ENCODE measurements at regions of chr7 and their contacts with region 1.

Region 1: GRCh38 chr7:128343554-128344430 is at the start of gene RBM28:
- DNase-seq: peak; percentile 94
- H3K4me3 ChIP-seq: peak within 1 kb of the TSS; percentile 60 to 80
- H3K27ac ChIP-seq: peak within 1 kb of the TSS; percentile 73 to 86
- H3K4me1 ChIP-seq: peaks cover 0 to 28% of the 10 kb centered on the region in 2 experiments; a peak in 2 of 4 replicates
- H3K27me3 ChIP-seq: no peaks in the 10 kb centered on the region
- CTCF ChIP-seq: no peak
- EP300 ChIP-seq: peak in 1 of 2 experiments; percentile 70; a peak in 1 of 4 replicates
- RAD21 ChIP-seq: peak; percentile 31; the same call in 1 of the 2 replicates
- polyA plus RNA-seq, gene RBM28: 29.1 and 33.0 TPM in 2 replicates

Region 2: GRCh38 chr7:128056901-128057300 is 286.9 kb before region 1 on chr7:
- CTCF ChIA-PET with region 1: no interaction called
- POLR2A ChIA-PET with region 1: no interaction called
- DNase-seq: no peak
- H3K4me3 ChIP-seq: no peak overlapping the region
- H3K27ac ChIP-seq: peak overlapping the region in 1 of 2 experiments; percentile 29; a peak in 2 of 4 replicates
- H3K4me1 ChIP-seq: peaks cover 6 to 45% of the 10 kb centered on the region in 2 experiments; a peak in 3 of 4 replicates
- H3K27me3 ChIP-seq: no peaks in the 10 kb centered on the region
- CTCF ChIP-seq: no peak
- EP300 ChIP-seq: peak in 1 of 2 experiments; percentile 60; a peak in 1 of 4 replicates
- RAD21 ChIP-seq: no peak

Region 3: GRCh38 chr7:128266883-128267607 is 76.7 kb before region 1 on chr7:
- CTCF ChIA-PET with region 1: interaction called, 10 read pairs
- POLR2A ChIA-PET with region 1: interaction called, 4 read pairs
- DNase-seq: peak; percentile 90
- H3K4me3 ChIP-seq: peak overlapping the region; percentile 30 to 33; a peak in 3 of 4 replicates
- H3K27ac ChIP-seq: peak overlapping the region; percentile 54 to 99
- H3K4me1 ChIP-seq: peaks cover 18 to 41% of the 10 kb centered on the region in 2 experiments; a peak in 3 of 4 replicates
- H3K27me3 ChIP-seq: no peaks in the 10 kb centered on the region
- CTCF ChIP-seq: peak; percentile 34
- EP300 ChIP-seq: peak; percentile 8 to 77; a peak in 3 of 4 replicates
- RAD21 ChIP-seq: peak; percentile 41

Region 4: DNA sequence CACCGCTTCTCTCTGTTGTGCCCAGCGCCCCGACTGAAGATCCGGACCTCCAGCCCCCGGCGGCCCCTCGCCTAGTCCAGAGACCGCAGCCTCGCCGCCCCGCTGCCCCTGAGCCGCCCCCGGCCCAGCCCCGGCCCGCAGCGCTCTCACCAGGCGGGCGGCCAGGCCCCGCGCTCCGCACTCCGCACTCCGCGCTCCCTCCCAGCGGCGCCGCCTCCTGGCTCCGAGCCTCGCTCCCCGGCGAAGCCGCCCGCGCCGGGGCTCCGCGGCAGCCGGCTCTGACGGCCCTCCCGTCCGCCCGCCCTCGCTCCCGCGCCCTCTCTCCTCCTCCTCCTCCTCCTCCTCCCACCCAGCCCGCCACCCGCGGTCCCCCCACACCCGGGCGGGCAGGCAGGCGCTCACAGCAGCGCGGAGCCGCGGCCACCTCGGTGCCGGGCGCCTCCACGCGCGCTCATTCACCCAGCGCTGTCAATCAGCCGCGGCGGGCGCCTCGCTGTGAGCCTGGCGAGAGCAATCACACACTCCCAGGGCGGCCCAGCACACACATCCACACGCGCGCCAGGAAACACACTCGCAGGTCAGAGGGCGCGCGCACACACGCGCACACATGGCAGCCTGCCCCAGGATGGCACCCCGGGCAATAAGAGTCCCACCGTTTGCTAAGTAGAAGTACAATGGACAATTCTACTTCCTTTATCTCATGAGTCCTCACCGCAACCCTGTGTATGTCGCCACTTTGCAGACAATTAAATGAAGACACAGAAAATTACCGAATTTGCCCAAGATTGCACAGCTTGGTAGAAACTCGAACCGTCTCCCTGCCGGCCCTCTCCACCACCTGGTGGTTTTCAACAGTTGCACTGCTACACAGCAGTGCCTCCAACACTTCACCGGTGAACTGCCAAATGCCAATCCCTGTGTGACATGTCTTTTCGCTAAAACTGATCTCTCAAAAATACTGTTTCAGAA is 17.9 kb after region 1 on chr7 and contains the start of gene PRRT4:
- CTCF ChIA-PET with region 1: interaction called, 439 read pairs
- POLR2A ChIA-PET with region 1: interaction called, 37 read pairs
- DNase-seq: peak; percentile 73
- H3K4me3 ChIP-seq: peak within 1 kb of the TSS; percentile 54 to 63
- H3K27ac ChIP-seq: peak within 1 kb of the TSS in 1 of 2 experiments; percentile 100; a peak in 2 of 4 replicates
- H3K4me1 ChIP-seq: peaks cover 0 to 68% of the 10 kb centered on the region in 2 experiments; a peak in 2 of 4 replicates
- H3K27me3 ChIP-seq: peaks cover 46% of the 10 kb centered on the region
- CTCF ChIP-seq: no peak
- EP300 ChIP-seq: no peak
- RAD21 ChIP-seq: peak; percentile 58
- polyA plus RNA-seq, gene PRRT4: 1.5 and 3.4 TPM in 2 replicates

Region 5: GRCh38 chr7:128425850-128426249 is 82.1 kb after region 1 on chr7:
- CTCF ChIA-PET with region 1: interaction called, 1,786 read pairs
- POLR2A ChIA-PET with region 1: no interaction called
- DNase-seq: peak; percentile 83
- H3K4me3 ChIP-seq: no peak overlapping the region; a peak in 1 of 4 replicates
- H3K27ac ChIP-seq: no peak overlapping the region
- H3K4me1 ChIP-seq: peaks cover 0 to 3% of the 10 kb centered on the region in 2 experiments; a peak in 1 of 4 replicates
- H3K27me3 ChIP-seq: no peaks in the 10 kb centered on the region
- CTCF ChIP-seq: peak; percentile 100
- EP300 ChIP-seq: no peak
- RAD21 ChIP-seq: peak; percentile 95

Region 6: DNA sequence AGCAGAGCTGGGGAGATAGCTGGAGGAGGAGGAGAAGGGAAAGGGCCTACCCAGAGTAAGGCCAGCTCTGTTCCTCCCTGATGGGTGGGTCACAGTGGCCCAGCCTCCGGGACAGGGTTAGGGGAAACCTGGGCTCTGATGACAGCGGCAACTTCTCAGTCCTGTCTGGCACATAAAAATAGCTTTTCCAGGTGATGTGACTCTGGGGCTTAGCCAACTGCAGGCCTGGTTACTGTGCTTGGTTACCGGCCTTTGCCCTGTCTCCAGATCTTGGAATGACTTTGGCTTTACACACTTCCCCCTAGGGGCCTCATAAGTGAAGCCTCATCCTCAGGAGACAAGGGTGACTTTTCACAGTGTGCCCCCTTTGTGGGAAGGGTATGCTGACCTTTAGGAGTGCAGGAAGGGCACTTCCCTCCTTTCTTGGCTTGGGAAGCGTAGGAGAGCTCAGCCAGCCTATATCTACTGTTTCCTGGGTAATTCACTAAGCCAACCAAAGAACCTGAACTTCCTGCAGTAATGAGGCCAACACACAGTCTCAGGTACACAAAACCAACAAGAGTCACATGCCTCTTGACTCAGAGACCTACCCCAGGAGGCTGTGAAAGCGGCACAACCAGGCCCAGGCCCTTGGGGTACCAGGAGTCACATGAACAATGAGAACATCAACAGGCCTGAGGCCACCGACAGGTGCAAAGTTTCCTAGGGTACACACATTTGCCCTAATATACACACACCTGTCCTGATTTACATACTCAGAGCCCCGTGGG is 100.2 kb after region 1 on chr7:
- CTCF ChIA-PET with region 1: interaction called, 28 read pairs
- POLR2A ChIA-PET with region 1: no interaction called
- DNase-seq: no peak
- H3K4me3 ChIP-seq: no peak overlapping the region
- H3K27ac ChIP-seq: no peak overlapping the region
- H3K4me1 ChIP-seq: peaks cover 0 to 18% of the 10 kb centered on the region in 2 experiments; a peak in 1 of 4 replicates
- H3K27me3 ChIP-seq: no peaks in the 10 kb centered on the region
- CTCF ChIP-seq: no peak
- EP300 ChIP-seq: no peak
- RAD21 ChIP-seq: no peak

Region 7: GRCh38 chr7:128770233-128770632 is 426.4 kb after region 1 on chr7:
- CTCF ChIA-PET with region 1: no interaction called
- POLR2A ChIA-PET with region 1: no interaction called
- DNase-seq: no peak
- H3K4me3 ChIP-seq: no peak overlapping the region
- H3K27ac ChIP-seq: no peak overlapping the region; a peak in 1 of 4 replicates
- H3K4me1 ChIP-seq: peaks cover 3 to 7% of the 10 kb centered on the region in 2 experiments; a peak in 1 of 4 replicates
- H3K27me3 ChIP-seq: no peaks in the 10 kb centered on the region
- CTCF ChIP-seq: no peak
- EP300 ChIP-seq: no peak
- RAD21 ChIP-seq: no peak